MCF 10A (cell line): ENCODE measurements at regions of chr2 and their contacts with region 1.

Region 1: DNA sequence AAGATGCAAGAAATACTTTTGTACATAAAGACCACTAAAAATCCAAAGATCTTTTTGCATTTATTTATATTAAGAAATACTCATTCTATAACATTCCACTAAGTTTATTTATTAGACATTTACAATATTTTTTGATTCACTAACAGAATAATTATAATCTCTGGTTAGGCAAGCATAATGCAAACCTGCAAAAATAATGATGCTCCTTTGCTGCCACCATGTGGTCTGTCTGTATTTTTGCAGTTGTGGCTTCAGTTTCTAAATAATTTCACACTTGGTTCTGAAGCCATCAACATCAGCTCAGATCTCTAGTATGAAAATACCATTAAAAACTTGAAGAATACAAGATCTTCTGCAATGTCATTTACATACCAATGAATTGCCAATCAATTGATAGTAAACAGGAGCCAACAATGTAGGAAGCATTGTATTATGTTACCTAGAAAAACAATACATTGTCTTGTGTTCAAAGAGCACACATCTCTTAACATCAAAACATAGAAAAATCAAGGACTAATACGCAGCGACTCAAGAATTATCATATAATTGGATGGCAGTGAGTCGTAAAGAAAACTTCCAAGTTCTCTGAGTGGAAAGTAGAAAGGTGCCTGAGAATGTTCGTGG is 28.8 kb upstream of the WDR75 start:
- DNase-seq: peak; percentile 61
- H3K4me3 Mint-ChIP-seq: peak overlapping the region; percentile 43
- H3K27ac Mint-ChIP-seq: peak overlapping the region; percentile 29
- H3K4me1 Mint-ChIP-seq: peaks cover 17% of the 10 kb centered on the region
- H3K27me3 Mint-ChIP-seq: no peaks in the 10 kb centered on the region
- CTCF ChIP-seq: peak; percentile 77

Region 2: DNA sequence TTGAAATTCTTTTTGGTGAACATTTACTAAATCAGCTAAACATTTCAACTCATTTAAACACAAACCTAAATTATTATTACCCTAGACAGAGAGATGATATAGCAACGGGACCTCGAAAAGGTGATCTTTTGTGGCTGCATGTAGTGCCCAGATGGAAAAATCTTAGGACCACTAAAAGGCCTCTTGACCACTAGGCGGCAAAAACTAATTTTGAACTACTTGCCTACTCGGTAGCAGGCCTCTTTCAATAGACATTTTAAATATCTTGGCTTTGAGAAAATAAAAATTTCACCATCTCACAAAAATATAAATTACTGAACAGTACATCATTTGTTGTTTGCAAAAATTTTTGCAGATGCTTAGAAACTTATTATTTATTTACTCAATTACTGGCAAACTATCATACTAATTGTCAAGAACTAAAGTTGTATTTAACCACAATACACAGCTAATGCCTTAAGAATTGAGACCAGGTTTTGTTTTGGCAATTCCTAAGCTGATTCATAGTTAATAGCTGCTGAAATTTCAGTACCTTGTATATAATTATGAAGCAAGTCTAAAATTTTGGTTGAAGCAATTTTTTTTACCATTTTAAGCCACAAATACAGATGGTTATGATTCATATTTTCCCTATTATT is 428.9 kb before region 1 on chr2:
- CTCF ChIA-PET with region 1: interaction called, 11 read pairs
- POLR2A ChIA-PET with region 1: interaction called, 4 read pairs
- intact Hi-C with region 1: loop called (anchors 1 kb)
- DNase-seq: peak; percentile 52
- H3K4me3 Mint-ChIP-seq: no peak overlapping the region
- H3K27ac Mint-ChIP-seq: no peak overlapping the region
- H3K4me1 Mint-ChIP-seq: no peaks in the 10 kb centered on the region
- H3K27me3 Mint-ChIP-seq: no peaks in the 10 kb centered on the region
- CTCF ChIP-seq: peak; percentile 43

Region 3: DNA sequence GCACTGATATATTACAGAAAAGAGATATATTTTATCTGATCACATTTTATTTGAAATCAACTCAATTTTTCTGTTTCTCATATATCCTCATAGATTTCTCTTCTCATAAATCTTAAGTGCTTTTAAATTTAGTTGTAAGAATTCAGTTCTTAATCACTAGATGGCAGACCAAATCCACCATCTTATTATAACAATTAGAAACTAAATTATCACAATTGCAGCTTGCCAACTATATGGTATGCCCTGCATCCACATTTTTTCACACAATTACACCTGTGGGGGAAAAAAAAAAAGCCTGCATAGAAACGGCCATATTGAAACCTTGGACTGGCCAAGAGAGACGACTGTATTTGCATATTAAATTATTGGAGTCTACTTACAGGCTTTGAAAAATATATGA is 297.3 kb before region 1 on chr2:
- CTCF ChIA-PET with region 1: interaction called, 21 read pairs
- POLR2A ChIA-PET with region 1: interaction called, 5 read pairs
- intact Hi-C with region 1: loop called (anchors 1 kb)
- DNase-seq: peak; percentile 29
- H3K4me3 Mint-ChIP-seq: no peak overlapping the region
- H3K27ac Mint-ChIP-seq: no peak overlapping the region
- H3K4me1 Mint-ChIP-seq: no peaks in the 10 kb centered on the region
- H3K27me3 Mint-ChIP-seq: no peaks in the 10 kb centered on the region
- CTCF ChIP-seq: peak; percentile 50

Region 4: GRCh38 chr2:189287982-189288521 is 124.4 kb before region 1 on chr2:
- CTCF ChIA-PET with region 1: interaction called, 4 read pairs
- POLR2A ChIA-PET with region 1: interaction called, 5 read pairs
- intact Hi-C with region 1: loop called (anchors 1 kb)
- DNase-seq: peak; percentile 72
- H3K4me3 Mint-ChIP-seq: no peak overlapping the region
- H3K27ac Mint-ChIP-seq: peak overlapping the region; percentile 80
- H3K4me1 Mint-ChIP-seq: peaks cover 29% of the 10 kb centered on the region
- H3K27me3 Mint-ChIP-seq: no peaks in the 10 kb centered on the region
- CTCF ChIP-seq: peak; percentile 60

Region 5: DNA sequence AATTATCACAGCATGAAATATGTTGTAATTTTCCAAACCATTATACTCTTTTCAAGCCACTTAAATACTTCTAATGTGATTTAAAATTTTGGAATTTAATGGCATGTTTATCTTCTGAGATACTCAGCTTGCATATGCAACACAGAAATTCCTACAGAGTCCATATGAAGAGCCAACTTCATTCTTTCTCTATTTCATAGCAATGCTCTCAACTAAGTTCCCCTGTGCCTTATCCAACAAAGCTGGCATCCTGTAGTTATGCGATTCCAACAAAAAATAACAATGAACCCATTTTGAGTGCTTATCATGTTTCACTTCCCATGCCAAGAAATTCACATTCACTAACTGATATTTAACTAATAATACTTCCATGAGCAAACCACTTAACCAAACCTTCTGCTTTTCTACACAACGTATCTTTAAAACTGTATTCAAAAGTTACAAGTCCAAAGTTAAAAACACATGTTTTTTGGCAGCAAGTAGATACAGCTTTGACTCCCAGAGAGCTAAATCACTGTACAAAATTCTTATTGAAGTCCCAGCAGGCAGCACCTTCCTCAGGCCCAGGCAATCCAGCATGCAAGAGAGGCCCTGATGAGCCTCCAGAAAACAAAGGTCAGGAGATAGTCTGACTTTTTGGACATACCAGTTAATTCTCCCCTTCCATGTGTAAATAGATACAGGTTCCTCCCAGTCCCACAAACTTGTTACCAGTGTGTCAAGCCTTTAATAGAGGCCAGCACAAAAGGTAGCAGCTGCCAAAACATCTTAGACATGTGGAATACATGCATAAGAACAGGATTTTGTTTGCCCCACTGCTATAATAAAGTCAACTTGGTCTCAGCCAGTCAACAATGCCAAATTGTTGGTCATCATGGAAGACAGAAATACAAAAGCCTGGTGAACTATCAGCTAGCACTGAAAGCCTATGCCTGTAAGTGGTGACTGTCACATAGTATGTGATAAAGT is 84.3 kb before region 1 on chr2:
- CTCF ChIA-PET with region 1: no interaction called
- POLR2A ChIA-PET with region 1: no interaction called
- intact Hi-C with region 1: no loop called
- DNase-seq: no peak
- H3K4me3 Mint-ChIP-seq: no peak overlapping the region
- H3K27ac Mint-ChIP-seq: peak overlapping the region; percentile 65
- H3K4me1 Mint-ChIP-seq: peaks cover 13% of the 10 kb centered on the region
- H3K27me3 Mint-ChIP-seq: no peaks in the 10 kb centered on the region
- CTCF ChIP-seq: no peak

Region 6: GRCh38 chr2:189347540-189347939 is 64.9 kb before region 1 on chr2:
- CTCF ChIA-PET with region 1: interaction called, 4 read pairs
- POLR2A ChIA-PET with region 1: interaction called, 5 read pairs
- intact Hi-C with region 1: loop called (anchors 2 kb)
- DNase-seq: peak; percentile 85
- H3K4me3 Mint-ChIP-seq: no peak overlapping the region
- H3K27ac Mint-ChIP-seq: peak overlapping the region; percentile 55
- H3K4me1 Mint-ChIP-seq: peaks cover 17% of the 10 kb centered on the region
- H3K27me3 Mint-ChIP-seq: no peaks in the 10 kb centered on the region
- CTCF ChIP-seq: no peak

Region 7: GRCh38 chr2:189609423-189609816 is 197.0 kb after region 1 on chr2:
- CTCF ChIA-PET with region 1: no interaction called
- POLR2A ChIA-PET with region 1: no interaction called
- intact Hi-C with region 1: no loop called
- DNase-seq: peak; percentile 57
- H3K4me3 Mint-ChIP-seq: no peak overlapping the region
- H3K27ac Mint-ChIP-seq: no peak overlapping the region
- H3K4me1 Mint-ChIP-seq: no peaks in the 10 kb centered on the region
- H3K27me3 Mint-ChIP-seq: no peaks in the 10 kb centered on the region
- CTCF ChIP-seq: no peak